ENCODE measurements at regions of chr12 and their contacts with region 1.

Region 1: GRCh38 chr12:45122768-45123380 is 72.0 kb upstream of the DBX2 start:
- DNase-seq: peak; percentile 17
- ATAC-seq: 0 out of 2 replicates have a peak, but pooled peaks have one; percentile 75
- H3K4me3 ChIP-seq: no peak overlapping the region
- H3K27ac ChIP-seq: no peak overlapping the region
- H3K4me1 ChIP-seq: no peaks in the 10 kb centered on the region
- H3K27me3 ChIP-seq: peaks cover 13% of the 10 kb centered on the region
- CTCF ChIP-seq: peak; percentile 71; the same call in 1 of the 2 replicates

Region 2: GRCh38 chr12:44972746-44973421 is 150.0 kb before region 1 on chr12:
- CTCF ChIA-PET with region 1: no interaction called
- POLR2A ChIA-PET with region 1: no interaction called
- in situ Hi-C with region 1: no loop called
- intact Hi-C with region 1: loop called (anchors 2 kb)
- DNase-seq: no peak
- ATAC-seq: no peak
- H3K4me3 ChIP-seq: no peak overlapping the region
- H3K27ac ChIP-seq: no peak overlapping the region
- H3K4me1 ChIP-seq: no peaks in the 10 kb centered on the region
- H3K27me3 ChIP-seq: no peaks in the 10 kb centered on the region
- CTCF ChIP-seq: peak; percentile 70

Region 3: DNA sequence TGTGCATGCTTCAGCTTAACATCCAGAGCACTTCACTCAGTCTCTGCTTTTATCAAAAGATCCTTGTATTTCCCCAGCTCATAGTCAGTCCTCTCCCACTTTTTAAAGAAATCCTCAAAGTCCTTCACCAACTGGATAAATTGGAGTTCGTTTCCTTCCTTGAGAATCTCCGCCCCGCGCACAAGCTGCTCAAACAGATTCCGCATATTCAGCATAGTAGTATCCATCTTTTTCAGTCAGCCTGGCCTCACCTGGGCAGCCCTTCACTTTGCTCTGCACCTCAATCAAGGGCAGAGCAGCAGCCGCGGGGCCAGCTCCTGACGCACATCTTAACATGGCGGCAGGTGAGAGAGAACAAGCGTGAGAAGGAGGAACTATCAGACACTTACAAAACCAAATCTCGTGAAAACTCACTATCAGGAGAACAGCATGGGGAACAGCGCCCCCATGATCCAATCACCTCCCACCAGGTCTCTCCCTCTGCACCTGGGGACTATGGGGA is 57.7 kb before region 1 on chr12:
- CTCF ChIA-PET with region 1: no interaction called
- POLR2A ChIA-PET with region 1: no interaction called
- in situ Hi-C with region 1: no loop called
- intact Hi-C with region 1: no loop called
- DNase-seq: no peak
- ATAC-seq: no peak
- H3K4me3 ChIP-seq: no peak overlapping the region
- H3K27ac ChIP-seq: no peak overlapping the region
- H3K4me1 ChIP-seq: no peaks in the 10 kb centered on the region
- H3K27me3 ChIP-seq: peaks cover 10% of the 10 kb centered on the region
- CTCF ChIP-seq: no peak

Measured in Panc1 (cell line).